Activated T-helper 2 cell treated with anti-CD3 and anti-CD28 coated beads, Interferon-gamma antibody, Interleukin-2, Interleukin-4, amounts not matched to agents 10 μg/mL and 5 μg/mL and 100 μg/mL, durations not matched to agents 14 hours and 24 hours and 36 hours (primary cell): ENCODE measurements at regions of chr5 and their contacts with region 1.

Region 1: DNA sequence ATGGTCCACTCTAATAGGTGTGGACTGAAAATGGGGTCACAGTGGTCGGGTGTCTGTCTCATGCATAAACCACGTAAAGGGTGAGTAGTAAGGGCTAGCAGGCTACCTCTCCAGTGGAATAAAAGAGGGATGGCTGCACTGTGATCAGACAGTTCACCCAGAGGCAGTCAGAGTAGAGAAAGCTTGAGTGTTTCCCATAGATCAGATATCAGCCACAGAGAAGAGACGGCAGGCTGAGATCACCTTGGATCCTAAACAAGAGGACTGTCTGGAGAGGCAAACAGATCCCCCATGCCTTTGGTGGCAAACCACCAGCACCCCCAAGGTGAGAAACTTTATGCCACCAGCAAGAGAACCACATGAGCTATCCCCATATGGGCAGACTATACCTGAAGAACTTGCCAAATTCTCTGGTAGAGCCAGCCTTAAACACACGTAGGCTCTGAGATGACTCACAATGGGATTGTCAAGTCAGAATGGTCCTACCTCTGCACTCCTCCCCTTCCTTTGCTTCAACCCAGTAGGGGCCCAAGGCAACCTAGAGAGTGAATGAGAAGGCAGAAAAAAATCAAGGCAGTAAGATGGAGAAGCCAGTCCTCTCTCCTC is 205.2 kb upstream of the MAP3K1 start:
- DNase-seq: peak; percentile 43
- H3K4me3 Mint-ChIP-seq: peak overlapping the region; percentile 41
- H3K27ac Mint-ChIP-seq: peak overlapping the region; percentile 35
- H3K4me1 Mint-ChIP-seq: peaks cover 83% of the 10 kb centered on the region
- H3K27me3 Mint-ChIP-seq: no peaks in the 10 kb centered on the region

Region 2: DNA sequence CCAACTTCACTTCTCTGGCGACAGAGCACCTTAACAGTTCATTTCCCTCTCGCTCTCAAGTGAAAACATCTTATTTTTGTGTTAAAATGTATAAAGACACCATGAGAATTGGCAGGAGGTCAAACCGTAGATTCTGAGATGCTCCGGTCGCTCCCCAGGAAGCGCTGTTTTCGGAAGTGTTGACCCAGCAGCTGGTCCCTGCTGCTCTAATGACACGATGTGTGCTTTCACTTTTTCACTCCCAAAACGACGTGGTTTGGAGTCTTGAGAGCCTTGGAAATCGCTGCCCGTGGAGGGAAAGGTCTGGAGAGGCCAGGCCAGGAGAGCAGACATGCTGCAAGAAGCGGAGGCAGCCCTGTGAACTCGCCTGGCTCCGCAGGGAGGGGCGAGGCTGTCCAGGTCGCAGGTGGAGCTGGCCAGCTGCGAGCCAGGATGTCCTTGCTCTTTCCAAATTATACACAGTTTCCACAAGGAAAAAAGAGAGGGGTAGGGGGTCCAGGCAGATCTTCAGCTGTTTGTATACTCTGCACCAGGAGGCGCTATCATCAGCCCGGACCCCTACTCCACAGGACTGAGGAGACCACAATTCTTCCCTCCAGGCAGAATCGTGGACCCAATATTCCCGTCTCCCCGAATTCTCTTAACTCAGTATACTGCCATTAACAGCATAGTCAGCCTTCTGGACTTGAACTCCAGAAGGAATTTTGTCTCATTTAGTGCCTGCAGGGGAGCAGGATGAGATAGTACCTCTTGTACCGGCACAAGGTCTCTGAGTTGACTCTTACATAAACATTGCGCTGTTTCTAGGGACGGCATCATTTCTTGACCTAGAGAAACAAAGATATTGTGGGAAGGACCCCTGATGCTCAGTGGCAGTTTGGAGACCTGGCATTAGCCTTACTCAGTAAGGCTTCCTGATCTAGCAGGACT is 128.5 kb before region 1 on chr5:
- intact Hi-C with region 1: loop called (anchors 5 kb)
- DNase-seq: no peak
- H3K4me3 Mint-ChIP-seq: peak overlapping the region; percentile 78
- H3K27ac Mint-ChIP-seq: peak overlapping the region; percentile 82
- H3K4me1 Mint-ChIP-seq: peaks cover 44% of the 10 kb centered on the region
- H3K27me3 Mint-ChIP-seq: no peaks in the 10 kb centered on the region

Region 3: GRCh38 chr5:56585975-56586709 is 24.1 kb before region 1 on chr5:
- intact Hi-C with region 1: loop called (anchors 2 kb)
- DNase-seq: no peak
- H3K4me3 Mint-ChIP-seq: no peak overlapping the region
- H3K27ac Mint-ChIP-seq: no peak overlapping the region
- H3K4me1 Mint-ChIP-seq: peaks cover 37% of the 10 kb centered on the region
- H3K27me3 Mint-ChIP-seq: no peaks in the 10 kb centered on the region

Region 4: DNA sequence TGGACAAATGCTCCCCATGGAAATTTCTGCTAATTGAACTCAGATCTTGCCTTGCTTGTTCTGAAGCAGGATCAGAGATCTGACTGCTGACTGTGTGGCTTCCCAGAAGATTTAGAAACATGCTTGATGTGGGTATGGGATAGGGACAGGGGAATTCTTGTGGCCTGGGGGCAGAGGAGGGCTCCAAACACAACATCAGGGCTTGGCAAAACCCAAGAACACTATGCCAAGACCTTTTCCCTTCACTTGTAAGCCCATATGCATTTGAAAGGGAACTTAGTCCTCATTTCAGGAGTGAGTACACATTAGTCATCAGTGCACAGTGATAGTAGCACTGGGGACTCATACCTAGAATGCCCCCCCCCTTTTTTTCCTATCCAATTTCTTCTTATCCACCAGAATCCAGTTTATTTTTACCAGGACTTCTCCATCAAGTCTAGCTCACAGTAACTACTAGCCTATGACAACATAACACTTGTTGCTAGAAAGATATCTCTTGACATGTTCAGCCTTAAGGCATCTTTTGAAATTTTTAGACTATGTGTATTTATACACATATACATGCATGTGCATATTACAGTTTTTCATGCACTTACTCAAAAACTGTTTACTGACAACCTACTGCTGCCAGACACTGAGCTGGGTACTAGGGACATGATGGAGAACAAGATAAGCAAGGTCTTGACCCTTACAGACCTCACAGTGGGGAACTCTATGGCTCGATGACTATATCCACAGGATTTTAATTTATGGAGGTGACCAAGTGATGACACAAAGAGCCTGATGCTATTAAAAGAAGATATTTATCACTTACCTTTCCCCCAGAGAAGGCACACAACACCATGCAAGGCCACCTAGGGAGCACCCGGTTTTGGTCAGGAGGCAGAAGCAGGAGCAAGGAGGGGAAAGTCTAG is 46.9 kb after region 1 on chr5:
- intact Hi-C with region 1: loop called (anchors 5 kb)
- DNase-seq: no peak
- H3K4me3 Mint-ChIP-seq: no peak overlapping the region
- H3K27ac Mint-ChIP-seq: no peak overlapping the region
- H3K4me1 Mint-ChIP-seq: peaks cover 17% of the 10 kb centered on the region
- H3K27me3 Mint-ChIP-seq: peaks cover 21% of the 10 kb centered on the region

Region 5: GRCh38 chr5:56670118-56670483 is 59.9 kb after region 1 on chr5:
- intact Hi-C with region 1: loop called (anchors 1 kb)
- DNase-seq: peak; percentile 44
- H3K4me3 Mint-ChIP-seq: no peak overlapping the region
- H3K27ac Mint-ChIP-seq: peak overlapping the region; percentile 46
- H3K4me1 Mint-ChIP-seq: peaks cover 37% of the 10 kb centered on the region
- H3K27me3 Mint-ChIP-seq: peaks cover 4% of the 10 kb centered on the region

Region 6: GRCh38 chr5:56692359-56693219 is 82.4 kb after region 1 on chr5:
- intact Hi-C with region 1: loop called (anchors 2 kb)
- DNase-seq: no peak
- H3K4me3 Mint-ChIP-seq: peak overlapping the region; percentile 28
- H3K27ac Mint-ChIP-seq: peak overlapping the region; percentile 30
- H3K4me1 Mint-ChIP-seq: peaks cover 62% of the 10 kb centered on the region
- H3K27me3 Mint-ChIP-seq: no peaks in the 10 kb centered on the region